Activated CD4-positive, alpha-beta memory T cell treated with anti-CD3 and anti-CD28 coated beads, Interleukin-2, amount 10 ng/mL, durations not matched to agents 7 days and 5 days (primary cell): ENCODE measurements at regions of chr3 and their contacts with region 1.

Region 1: GRCh38 chr3:156509189-156510174 is 45.4 kb downstream of the SSR3 start:
- DNase-seq: no peak
- H3K4me3 Mint-ChIP-seq: no peak overlapping the region
- H3K27ac Mint-ChIP-seq: no peak overlapping the region
- H3K4me1 Mint-ChIP-seq: peaks cover 18% of the 10 kb centered on the region
- H3K27me3 Mint-ChIP-seq: peaks cover 22% of the 10 kb centered on the region

Region 2: DNA sequence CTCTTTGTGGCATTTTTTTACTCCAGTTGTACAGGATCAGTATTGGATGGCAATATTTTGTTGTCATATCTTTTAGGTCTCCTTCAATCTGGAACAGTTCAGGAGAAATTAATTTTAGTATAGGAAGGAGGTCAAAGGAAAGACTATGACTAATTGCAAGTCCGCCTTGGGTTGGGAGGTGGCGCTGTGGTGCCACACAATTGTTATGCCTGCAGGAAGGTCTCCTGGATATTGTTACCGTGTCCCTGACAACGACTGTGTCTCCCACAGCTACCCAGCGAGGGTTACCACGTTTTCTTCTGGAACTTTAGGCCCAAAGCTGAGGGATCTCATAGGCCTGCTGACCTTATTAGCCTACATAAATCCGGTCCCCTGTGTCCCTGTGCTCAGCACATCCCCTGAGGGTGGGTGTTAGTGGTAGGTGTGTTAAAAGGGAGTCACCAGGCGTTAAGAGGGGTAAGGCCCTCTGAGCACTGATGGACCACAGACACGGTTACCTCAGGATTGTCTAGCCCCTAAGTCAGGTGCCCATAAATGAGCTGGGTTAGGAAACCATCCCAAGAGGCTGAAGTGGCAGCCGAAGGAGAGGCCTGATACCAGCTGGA is 357.6 kb before region 1 on chr3:
- CTCF ChIA-PET with region 1: interaction called, 64 read pairs
- POLR2A ChIA-PET with region 1: no interaction called
- DNase-seq: peak; percentile 67
- H3K4me3 Mint-ChIP-seq: no peak overlapping the region
- H3K27ac Mint-ChIP-seq: no peak overlapping the region
- H3K4me1 Mint-ChIP-seq: peaks cover 7% of the 10 kb centered on the region
- H3K27me3 Mint-ChIP-seq: peaks cover 3% of the 10 kb centered on the region

Region 3: DNA sequence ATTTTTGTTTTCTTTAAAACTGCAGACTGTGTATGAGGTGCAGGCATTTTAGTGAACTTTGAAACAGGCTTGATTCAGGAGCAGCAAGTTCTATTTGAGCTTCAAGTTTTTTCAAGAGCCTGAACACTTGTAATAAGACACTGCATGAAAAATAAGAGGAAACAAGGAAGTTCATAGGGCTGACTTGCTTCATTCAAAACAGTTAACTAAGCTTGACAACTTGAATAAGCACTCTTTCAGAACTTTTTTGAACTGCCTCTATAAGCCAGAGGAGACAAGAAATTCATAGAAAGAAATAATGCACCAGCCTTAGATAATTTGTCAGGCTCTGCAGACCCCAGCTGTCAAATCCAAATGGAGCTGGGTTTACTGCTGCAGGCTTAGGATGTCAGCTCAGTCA is 84.7 kb before region 1 on chr3:
- CTCF ChIA-PET with region 1: no interaction called
- POLR2A ChIA-PET with region 1: no interaction called
- DNase-seq: no peak
- H3K4me3 Mint-ChIP-seq: no peak overlapping the region
- H3K27ac Mint-ChIP-seq: no peak overlapping the region
- H3K4me1 Mint-ChIP-seq: no peaks in the 10 kb centered on the region
- H3K27me3 Mint-ChIP-seq: peaks cover 8% of the 10 kb centered on the region

Region 4: GRCh38 chr3:156449712-156450574 is 59.5 kb before region 1 on chr3:
- CTCF ChIA-PET with region 1: interaction called, 42 read pairs
- POLR2A ChIA-PET with region 1: no interaction called
- DNase-seq: no peak
- H3K4me3 Mint-ChIP-seq: no peak overlapping the region
- H3K27ac Mint-ChIP-seq: no peak overlapping the region
- H3K4me1 Mint-ChIP-seq: no peaks in the 10 kb centered on the region
- H3K27me3 Mint-ChIP-seq: peaks cover 16% of the 10 kb centered on the region

Region 5: GRCh38 chr3:156474560-156475389 is 34.7 kb before region 1 on chr3:
- CTCF ChIA-PET with region 1: interaction called, 17 read pairs
- POLR2A ChIA-PET with region 1: no interaction called
- DNase-seq: no peak
- H3K4me3 Mint-ChIP-seq: no peak overlapping the region
- H3K27ac Mint-ChIP-seq: no peak overlapping the region
- H3K4me1 Mint-ChIP-seq: peaks cover 1% of the 10 kb centered on the region
- H3K27me3 Mint-ChIP-seq: peaks cover 27% of the 10 kb centered on the region

Region 6: GRCh38 chr3:156483961-156484787 is 25.3 kb before region 1 on chr3:
- CTCF ChIA-PET with region 1: interaction called, 10 read pairs
- POLR2A ChIA-PET with region 1: interaction called, 17 read pairs
- DNase-seq: peak; percentile 62
- H3K4me3 Mint-ChIP-seq: peak overlapping the region; percentile 72
- H3K27ac Mint-ChIP-seq: peak overlapping the region; percentile 88
- H3K4me1 Mint-ChIP-seq: peaks cover 42% of the 10 kb centered on the region
- H3K27me3 Mint-ChIP-seq: no peaks in the 10 kb centered on the region

Region 7: GRCh38 chr3:156525808-156526207 is 16.3 kb after region 1 on chr3:
- CTCF ChIA-PET with region 1: interaction called, 12 read pairs
- POLR2A ChIA-PET with region 1: interaction called, 5 read pairs
- DNase-seq: no peak
- H3K4me3 Mint-ChIP-seq: no peak overlapping the region
- H3K27ac Mint-ChIP-seq: no peak overlapping the region
- H3K4me1 Mint-ChIP-seq: peaks cover 33% of the 10 kb centered on the region
- H3K27me3 Mint-ChIP-seq: peaks cover 6% of the 10 kb centered on the region

Region 8: DNA sequence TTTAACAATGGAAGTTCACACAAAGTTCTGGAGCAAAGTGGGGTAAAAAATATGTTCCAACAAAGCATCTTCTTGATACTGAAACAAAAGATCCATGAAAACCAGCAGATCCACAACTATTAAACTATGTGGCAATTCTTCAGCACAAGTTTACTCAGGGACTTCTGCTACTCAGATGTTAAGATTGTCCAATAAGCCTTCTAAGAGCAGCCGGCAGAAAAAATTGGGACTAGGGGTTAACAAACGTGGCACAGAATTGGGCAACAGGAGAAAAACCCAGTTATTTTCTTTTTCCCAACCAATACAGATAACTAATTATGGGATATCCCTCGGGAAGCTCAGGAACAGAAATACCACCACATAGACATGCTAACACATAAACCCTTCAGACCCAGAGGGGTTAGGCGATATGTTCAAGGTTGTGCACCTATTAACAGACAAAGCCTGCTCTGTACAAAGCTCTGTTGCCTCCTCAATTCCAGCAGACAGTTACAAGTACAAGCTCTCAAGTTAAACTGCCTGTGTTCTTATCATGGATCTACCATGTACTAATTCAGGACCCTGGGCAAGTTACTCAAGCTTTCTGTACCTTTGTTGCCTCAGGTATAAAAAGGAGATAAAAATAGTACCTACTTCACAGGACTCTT is 38.7 kb after region 1 on chr3:
- CTCF ChIA-PET with region 1: no interaction called
- POLR2A ChIA-PET with region 1: no interaction called
- DNase-seq: no peak
- H3K4me3 Mint-ChIP-seq: no peak overlapping the region
- H3K27ac Mint-ChIP-seq: no peak overlapping the region
- H3K4me1 Mint-ChIP-seq: peaks cover 58% of the 10 kb centered on the region
- H3K27me3 Mint-ChIP-seq: no peaks in the 10 kb centered on the region

Region 9: DNA sequence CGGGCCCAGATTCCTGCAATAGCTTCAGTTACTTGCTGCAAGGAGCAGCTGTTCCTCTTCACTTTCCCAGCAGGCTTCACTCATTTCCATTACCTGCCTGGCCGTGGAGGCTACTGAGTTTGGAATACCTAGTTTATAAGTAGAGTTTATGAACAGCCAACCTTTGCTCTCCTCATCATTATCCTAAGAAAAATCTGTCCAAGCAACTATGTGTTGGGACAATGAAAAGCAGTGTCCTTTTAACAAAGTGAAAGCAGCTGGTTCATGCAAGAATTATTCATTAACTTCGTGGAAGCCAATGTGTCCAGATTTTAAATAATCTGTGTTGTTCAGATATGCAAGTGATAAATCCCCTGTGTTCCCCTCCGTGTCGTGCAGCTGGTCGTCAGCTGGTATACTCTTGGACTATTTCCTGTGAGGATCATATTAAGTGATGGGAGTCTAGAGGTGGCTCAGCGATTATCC is 84.8 kb after region 1 on chr3:
- CTCF ChIA-PET with region 1: no interaction called
- POLR2A ChIA-PET with region 1: no interaction called
- DNase-seq: no peak
- H3K4me3 Mint-ChIP-seq: no peak overlapping the region
- H3K27ac Mint-ChIP-seq: no peak overlapping the region
- H3K4me1 Mint-ChIP-seq: peaks cover 2% of the 10 kb centered on the region
- H3K27me3 Mint-ChIP-seq: peaks cover 22% of the 10 kb centered on the region